Activated CD4-positive, alpha-beta T cell treated with anti-CD3 and anti-CD28 coated beads for 36 hours (primary cell): ENCODE measurements at regions of chr4 and their contacts with region 1.

Region 1: GRCh38 chr4:113394730-113395530 is 345.5 kb downstream of the ANK2 start:
- DNase-seq: peak; percentile 64
- ATAC-seq: peak; percentile 97
- H3K4me3 Mint-ChIP-seq: no peak overlapping the region
- H3K27ac Mint-ChIP-seq: no peak overlapping the region
- H3K4me1 Mint-ChIP-seq: peaks cover 8% of the 10 kb centered on the region
- H3K27me3 Mint-ChIP-seq: peaks cover 2% of the 10 kb centered on the region

Region 2: GRCh38 chr4:113189546-113189945 is 205.4 kb before region 1 on chr4:
- CTCF ChIA-PET with region 1: no interaction called
- POLR2A ChIA-PET with region 1: no interaction called
- intact Hi-C with region 1: no loop called
- DNase-seq: no peak
- ATAC-seq: no peak
- H3K4me3 Mint-ChIP-seq: no peak overlapping the region
- H3K27ac Mint-ChIP-seq: no peak overlapping the region
- H3K4me1 Mint-ChIP-seq: no peaks in the 10 kb centered on the region
- H3K27me3 Mint-ChIP-seq: peaks cover 7% of the 10 kb centered on the region

Region 3: GRCh38 chr4:113378836-113379235 is 16.1 kb before region 1 on chr4:
- CTCF ChIA-PET with region 1: interaction called, 10 read pairs
- POLR2A ChIA-PET with region 1: no interaction called
- intact Hi-C with region 1: no loop called
- DNase-seq: no peak
- ATAC-seq: no peak
- H3K4me3 Mint-ChIP-seq: no peak overlapping the region
- H3K27ac Mint-ChIP-seq: no peak overlapping the region
- H3K4me1 Mint-ChIP-seq: peaks cover 3% of the 10 kb centered on the region
- H3K27me3 Mint-ChIP-seq: no peaks in the 10 kb centered on the region

Region 4: DNA sequence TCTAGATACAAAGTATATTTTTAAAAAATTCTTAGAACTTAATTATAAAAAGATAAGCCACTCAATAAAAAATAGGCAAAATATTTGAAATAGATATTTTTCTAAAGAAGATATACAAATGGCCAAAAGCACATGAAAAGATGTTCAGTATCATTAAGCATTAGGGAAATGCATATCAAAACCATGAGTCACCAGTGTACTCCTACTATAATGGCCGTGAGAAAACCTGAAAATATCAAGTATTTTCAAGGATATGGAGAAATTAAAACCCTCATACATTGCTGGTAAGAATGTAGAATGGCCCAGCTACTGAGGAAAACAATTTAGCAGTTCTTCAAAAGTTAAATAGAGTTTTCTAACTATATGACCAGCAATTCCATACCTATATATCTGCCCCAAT is 28.7 kb after region 1 on chr4:
- CTCF ChIA-PET with region 1: no interaction called
- POLR2A ChIA-PET with region 1: no interaction called
- intact Hi-C with region 1: no loop called
- DNase-seq: no peak
- ATAC-seq: no peak
- H3K4me3 Mint-ChIP-seq: no peak overlapping the region
- H3K27ac Mint-ChIP-seq: no peak overlapping the region
- H3K4me1 Mint-ChIP-seq: no peaks in the 10 kb centered on the region
- H3K27me3 Mint-ChIP-seq: peaks cover 2% of the 10 kb centered on the region

Region 5: DNA sequence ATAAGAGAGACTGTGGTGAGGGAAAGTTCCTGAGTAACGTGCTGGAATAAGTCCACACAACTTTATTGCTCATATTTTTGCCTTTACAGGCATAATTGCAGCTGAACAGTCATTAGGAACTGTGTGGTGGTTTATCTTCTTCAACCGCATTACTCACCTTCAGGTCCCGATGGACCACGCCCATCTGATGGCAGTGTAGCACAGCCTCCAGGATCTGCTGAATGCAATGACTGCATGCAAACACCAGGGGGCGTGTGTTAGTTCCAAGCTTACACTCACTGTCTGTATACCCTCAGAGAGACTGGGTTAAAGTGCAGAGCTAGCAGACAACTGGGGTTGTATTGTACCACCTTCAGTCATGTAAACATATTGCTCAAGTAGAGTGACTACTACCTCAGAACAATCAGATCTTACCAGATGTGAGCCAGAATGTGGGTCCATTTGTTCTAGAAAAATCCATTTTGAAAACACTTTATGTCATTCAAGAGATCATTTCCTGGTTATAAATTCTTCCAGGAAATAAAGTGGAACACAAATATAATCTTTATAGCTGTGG is 152.6 kb after region 1 on chr4:
- CTCF ChIA-PET with region 1: interaction called, 10 read pairs
- POLR2A ChIA-PET with region 1: no interaction called
- intact Hi-C with region 1: loop called (anchors 2 kb)
- DNase-seq: peak; percentile 95
- ATAC-seq: peak; percentile 99
- H3K4me3 Mint-ChIP-seq: no peak overlapping the region
- H3K27ac Mint-ChIP-seq: peak overlapping the region; percentile 49
- H3K4me1 Mint-ChIP-seq: peaks cover 24% of the 10 kb centered on the region
- H3K27me3 Mint-ChIP-seq: no peaks in the 10 kb centered on the region

Region 6: GRCh38 chr4:113908829-113909228 is 513.9 kb after region 1 on chr4:
- CTCF ChIA-PET with region 1: no interaction called
- POLR2A ChIA-PET with region 1: no interaction called
- intact Hi-C with region 1: loop called (anchors 5 kb)
- DNase-seq: no peak
- ATAC-seq: no peak
- H3K4me3 Mint-ChIP-seq: no peak overlapping the region
- H3K27ac Mint-ChIP-seq: no peak overlapping the region
- H3K4me1 Mint-ChIP-seq: peaks cover 24% of the 10 kb centered on the region
- H3K27me3 Mint-ChIP-seq: no peaks in the 10 kb centered on the region

Region 7: DNA sequence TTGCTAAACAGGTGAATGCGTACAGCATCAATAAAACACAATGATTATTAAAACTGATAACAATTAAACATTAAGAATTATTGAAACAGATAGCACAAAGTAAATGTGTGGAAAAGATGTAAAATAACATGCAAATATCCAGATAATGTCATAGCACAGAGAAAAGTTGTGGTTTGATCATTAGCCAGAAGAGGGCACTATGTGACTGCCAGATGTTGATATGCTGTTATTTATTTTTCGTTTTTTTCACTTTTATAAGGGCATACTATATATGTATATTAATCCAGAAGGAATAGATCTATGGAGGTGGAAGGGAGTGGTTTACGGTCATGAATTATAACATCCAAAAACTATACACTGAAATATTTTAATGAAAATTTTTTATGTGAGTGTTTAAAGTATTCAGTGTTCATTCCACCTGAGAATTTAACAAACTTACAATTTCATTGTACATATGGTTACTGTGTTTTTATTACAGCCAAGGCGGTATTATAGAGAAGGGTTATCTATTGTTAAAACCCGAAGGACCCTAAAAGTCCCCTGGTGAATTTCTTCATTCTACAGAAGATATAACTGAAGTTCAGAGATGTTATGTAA is 991.8 kb after region 1 on chr4:
- CTCF ChIA-PET with region 1: interaction called, 7 read pairs
- POLR2A ChIA-PET with region 1: no interaction called
- intact Hi-C with region 1: loop called (anchors 1 to 5 kb)
- DNase-seq: no peak
- ATAC-seq: no peak
- H3K4me3 Mint-ChIP-seq: no peak overlapping the region
- H3K27ac Mint-ChIP-seq: no peak overlapping the region
- H3K4me1 Mint-ChIP-seq: no peaks in the 10 kb centered on the region
- H3K27me3 Mint-ChIP-seq: peaks cover 9% of the 10 kb centered on the region